ENCODE measurements at regions of chr13 and their contacts with region 1.

Region 1: DNA sequence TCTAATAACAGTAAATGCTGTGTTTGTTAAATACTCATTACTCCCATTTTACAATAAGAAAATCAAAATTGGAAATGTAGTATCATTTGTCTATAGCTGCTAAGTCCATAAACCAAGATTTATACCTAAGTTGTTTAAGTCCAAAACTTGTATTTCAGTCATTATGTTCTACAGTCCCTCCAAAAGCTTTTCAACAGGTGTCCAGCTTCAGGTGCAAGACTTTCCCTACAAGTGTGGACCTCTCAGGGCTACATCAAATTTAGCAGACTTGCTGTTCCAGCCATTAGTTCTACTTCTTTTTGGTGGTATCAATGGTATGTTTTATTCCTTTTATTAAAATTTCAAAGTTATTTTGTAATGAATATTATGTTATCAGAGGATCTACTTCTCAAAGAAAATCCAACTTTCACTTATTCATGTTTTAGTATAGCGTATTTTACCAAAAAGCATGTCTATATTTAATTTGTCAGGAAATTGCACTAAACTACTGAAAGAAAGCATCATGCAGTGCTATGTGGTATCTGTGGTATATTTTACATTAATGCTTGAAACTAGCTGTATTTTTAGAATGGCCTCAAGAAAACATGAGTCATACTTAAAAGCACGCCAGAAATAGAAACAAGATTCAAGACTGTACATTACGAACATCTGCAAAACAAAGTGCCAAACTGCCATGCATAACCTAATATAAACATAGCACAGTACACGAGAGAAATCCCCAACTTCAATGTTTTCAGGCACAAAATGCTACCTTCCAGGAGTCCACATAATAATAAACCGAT is 44.5 kb downstream of the VWA8 start:
- DNase-seq: no peak
- H3K4me3 Mint-ChIP-seq: peak overlapping the region; percentile 79
- H3K27ac Mint-ChIP-seq: peak overlapping the region; percentile 96
- H3K4me1 Mint-ChIP-seq: peaks cover 58% of the 10 kb centered on the region
- H3K27me3 Mint-ChIP-seq: no peaks in the 10 kb centered on the region

Region 2: GRCh38 chr13:41465241-41465847 is 451.0 kb before region 1 on chr13:
- intact Hi-C with region 1: loop called (anchors 2 kb)
- DNase-seq: peak; percentile 89
- H3K4me3 Mint-ChIP-seq: peak overlapping the region; percentile 80
- H3K27ac Mint-ChIP-seq: peak overlapping the region; percentile 96
- H3K4me1 Mint-ChIP-seq: peaks cover 90% of the 10 kb centered on the region
- H3K27me3 Mint-ChIP-seq: no peaks in the 10 kb centered on the region

Region 3: DNA sequence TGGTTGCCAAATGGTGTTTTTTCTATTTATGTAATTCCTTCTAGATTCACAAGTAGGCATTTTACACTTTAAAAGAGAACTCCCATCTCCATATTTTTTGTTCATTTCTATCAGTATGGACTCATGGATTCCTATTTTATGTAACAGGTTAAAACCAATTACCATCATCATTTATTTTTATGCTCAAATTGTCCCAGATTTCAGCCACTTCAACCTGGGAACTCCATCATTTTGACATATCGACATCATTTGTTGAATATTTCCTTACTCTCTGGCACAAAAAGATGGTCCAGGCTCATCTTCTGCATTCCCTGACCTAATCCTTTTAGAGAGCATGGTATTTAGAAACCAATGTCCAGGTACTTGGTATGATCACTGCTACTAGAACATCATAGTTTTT is 35.4 kb before region 1 on chr13:
- intact Hi-C with region 1: no loop called
- DNase-seq: no peak
- H3K4me3 Mint-ChIP-seq: no peak overlapping the region
- H3K27ac Mint-ChIP-seq: no peak overlapping the region
- H3K4me1 Mint-ChIP-seq: no peaks in the 10 kb centered on the region
- H3K27me3 Mint-ChIP-seq: no peaks in the 10 kb centered on the region

Region 4: GRCh38 chr13:41905600-41906254 is 10.6 kb before region 1 on chr13:
- intact Hi-C with region 1: loop called (anchors 2 kb)
- DNase-seq: no peak
- H3K4me3 Mint-ChIP-seq: no peak overlapping the region
- H3K27ac Mint-ChIP-seq: no peak overlapping the region
- H3K4me1 Mint-ChIP-seq: peaks cover 14% of the 10 kb centered on the region
- H3K27me3 Mint-ChIP-seq: no peaks in the 10 kb centered on the region

Region 5: DNA sequence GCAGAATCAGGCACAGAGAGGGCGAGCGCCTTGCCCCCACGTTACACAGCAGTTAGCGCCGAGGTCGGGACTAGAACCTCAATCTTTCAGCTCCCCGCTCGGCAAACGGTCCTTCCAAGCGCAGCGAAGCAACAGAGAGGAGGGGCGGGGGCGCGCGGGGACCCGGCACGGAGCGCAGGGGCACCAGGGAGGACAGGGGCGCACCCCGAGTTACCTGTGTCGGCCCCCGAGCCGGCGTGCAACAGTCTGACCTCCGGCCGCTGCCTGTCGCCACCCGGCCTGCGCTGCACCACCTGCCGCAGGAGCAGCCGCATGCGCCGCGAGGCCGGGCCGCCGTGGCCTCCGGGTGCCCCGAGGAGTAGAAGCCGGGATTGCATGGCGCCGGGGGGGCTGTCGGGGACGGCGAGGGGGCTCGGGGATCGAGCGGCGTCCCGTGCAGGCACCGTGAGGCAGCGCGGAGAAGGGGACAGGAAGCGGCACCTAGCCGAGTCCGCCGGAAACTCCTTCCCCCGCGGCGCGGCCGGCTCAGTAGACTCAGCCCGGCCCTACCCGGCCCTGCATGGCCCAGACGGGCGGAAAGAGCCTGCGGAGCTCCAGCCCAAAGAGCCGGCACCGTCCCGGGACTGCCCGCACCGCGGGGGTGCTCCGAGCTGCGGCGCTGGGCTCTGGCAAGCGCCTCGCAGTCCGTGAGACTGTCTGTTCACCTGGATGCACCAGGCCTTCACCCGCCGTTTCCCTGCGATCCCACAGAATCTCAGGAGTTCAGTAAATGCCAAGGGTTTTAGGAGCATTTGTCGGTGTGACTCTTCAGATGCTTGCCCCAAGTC is 44.5 kb after region 1 on chr13 and contains the start of gene VWA8:
- intact Hi-C with region 1: loop called (anchors 1 kb)
- DNase-seq: peak; percentile 81
- H3K4me3 Mint-ChIP-seq: peak within 1 kb of the TSS; percentile 95
- H3K27ac Mint-ChIP-seq: peak within 1 kb of the TSS; percentile 91
- H3K4me1 Mint-ChIP-seq: peaks cover 45% of the 10 kb centered on the region
- H3K27me3 Mint-ChIP-seq: peaks cover 3% of the 10 kb centered on the region
- total RNA-seq, gene VWA8: 26.4 and 26.6 TPM in 2 replicates

Region 6: GRCh38 chr13:42048682-42049453 is 132.5 kb after region 1 on chr13:
- intact Hi-C with region 1: loop called (anchors 2 kb)
- DNase-seq: peak; percentile 59
- H3K4me3 Mint-ChIP-seq: peak overlapping the region; percentile 88
- H3K27ac Mint-ChIP-seq: peak overlapping the region; percentile 80
- H3K4me1 Mint-ChIP-seq: peaks cover 25% of the 10 kb centered on the region
- H3K27me3 Mint-ChIP-seq: peaks cover 16% of the 10 kb centered on the region

Region 7: GRCh38 chr13:42686165-42686564 is 769.8 kb after region 1 on chr13:
- intact Hi-C with region 1: no loop called
- DNase-seq: no peak
- H3K4me3 Mint-ChIP-seq: no peak overlapping the region
- H3K27ac Mint-ChIP-seq: no peak overlapping the region
- H3K4me1 Mint-ChIP-seq: no peaks in the 10 kb centered on the region
- H3K27me3 Mint-ChIP-seq: peaks cover 16% of the 10 kb centered on the region